CD14-positive monocyte (primary cell): ENCODE measurements at regions of chr19 and their contacts with region 1.

Region 1: DNA sequence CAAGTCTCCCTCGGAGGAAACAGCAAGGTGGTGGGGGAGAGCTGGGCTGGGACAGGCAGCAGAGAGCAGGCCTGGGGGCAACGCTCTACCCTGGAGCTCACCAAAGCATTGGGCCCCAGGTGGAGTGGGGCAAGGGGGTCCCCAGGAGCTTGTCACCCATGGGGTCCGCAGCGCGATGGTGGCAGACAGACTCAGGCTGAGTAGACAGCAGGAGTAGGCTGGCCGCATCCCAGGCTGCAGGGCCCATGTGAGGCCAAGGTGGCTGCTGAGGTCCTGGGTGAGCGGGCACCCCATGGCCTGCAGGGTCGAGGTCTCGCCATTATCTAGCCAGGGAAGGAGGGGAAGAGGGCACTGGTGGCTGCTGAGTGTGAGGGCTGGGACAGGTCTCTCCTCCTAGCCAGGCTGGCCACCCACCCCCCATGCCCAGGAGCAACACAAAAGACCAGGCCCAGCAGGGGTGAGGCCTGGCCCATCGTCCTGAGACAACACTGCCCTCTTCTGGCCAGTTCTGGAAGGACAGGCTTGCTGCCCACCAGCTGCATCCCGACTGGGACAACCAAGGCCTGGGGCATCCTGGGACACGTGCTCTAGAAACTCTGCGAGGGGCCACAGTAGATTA is 33.1 kb downstream of the CEBPG start:
- DNase-seq: peak; percentile 63 to 74 (median 69)
- H3K4me3 ChIP-seq: no peak overlapping the region
- H3K4me3 Mint-ChIP-seq: no peak overlapping the region
- H3K27ac ChIP-seq: no peak overlapping the region
- H3K27ac Mint-ChIP-seq: no peak overlapping the region
- H3K4me1 ChIP-seq: peaks cover 46 to 62% of the 10 kb centered on the region in 2 donors
- H3K4me1 Mint-ChIP-seq: peaks cover 46% of the 10 kb centered on the region
- H3K27me3 ChIP-seq: no peaks in the 10 kb centered on the region
- H3K27me3 Mint-ChIP-seq: peaks cover 0 to 6% (median 0%) of the 10 kb centered on the region in 3 donors
- CTCF ChIP-seq: peak; percentile 97

Region 2: DNA sequence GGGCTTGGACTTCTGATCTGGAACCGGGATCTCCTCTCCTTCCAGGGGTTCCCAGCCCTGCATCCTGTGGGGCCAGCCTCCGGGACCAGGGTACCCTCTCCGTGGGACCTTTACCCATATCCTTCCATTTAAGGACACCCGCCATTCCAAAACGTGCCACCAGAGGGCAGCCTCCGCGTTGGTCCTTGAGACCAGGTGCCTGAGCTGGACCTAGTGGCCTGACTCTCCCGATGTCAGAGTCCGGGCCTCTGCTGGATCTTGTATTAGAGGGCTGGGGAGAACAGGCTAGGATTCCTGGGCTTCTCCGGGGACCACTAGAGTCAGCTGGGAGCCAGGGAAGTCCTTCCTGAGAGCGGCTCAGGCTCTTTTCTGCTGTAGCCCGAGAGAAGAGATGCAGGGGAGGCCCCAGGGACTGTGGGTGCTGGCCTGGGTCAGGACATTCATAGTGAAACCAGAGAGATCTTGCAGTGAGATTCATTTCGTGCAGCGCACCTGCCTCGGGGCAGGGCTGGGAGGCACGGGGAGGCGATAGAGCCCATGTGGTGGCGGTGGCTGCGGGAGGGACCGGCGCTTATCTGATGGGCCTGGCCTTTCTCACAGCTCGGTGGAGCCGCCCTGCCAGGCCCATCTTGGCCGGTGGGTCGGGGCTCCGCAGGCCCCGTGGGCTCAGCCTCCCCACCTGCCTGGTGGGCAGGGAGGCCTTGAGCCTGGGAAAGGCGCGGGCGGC is 171.2 kb before region 1 on chr19:
- intact Hi-C with region 1: loop called (anchors 1 to 2 kb)
- DNase-seq: peak; percentile 69 to 81 (median 78)
- H3K4me3 ChIP-seq: no peak overlapping the region
- H3K4me3 Mint-ChIP-seq: no peak overlapping the region
- H3K27ac ChIP-seq: no peak overlapping the region
- H3K27ac Mint-ChIP-seq: no peak overlapping the region
- H3K4me1 ChIP-seq: peaks cover 23 to 37% of the 10 kb centered on the region in 2 donors
- H3K4me1 Mint-ChIP-seq: peaks cover 6% of the 10 kb centered on the region
- H3K27me3 ChIP-seq: no peaks in the 10 kb centered on the region
- H3K27me3 Mint-ChIP-seq: peaks cover 1 to 4% (median 3%) of the 10 kb centered on the region in 3 donors
- CTCF ChIP-seq: peak; percentile 93